Posterior vena cava (tissue), 2 donors: ENCODE measurements at regions of chr19 and their contacts with region 1.

Region 1: GRCh38 chr19:44164673-44165512 is at the start of gene ZNF226:
- DNase-seq: peak; percentile 95
- total RNA-seq, gene ZNF226: 15.8 to 19.8 TPM

Region 2: GRCh38 chr19:44042147-44042546 is 122.7 kb before region 1 on chr19:
- intact Hi-C with region 1: no loop called
- DNase-seq: no peak

Region 3: GRCh38 chr19:44500148-44500956 is 335.5 kb after region 1 on chr19 and contains the start of gene ZNF180:
- intact Hi-C with region 1: loop called in 1 of 2 experiments (anchors 5 kb)
- DNase-seq: peak; percentile 98
- total RNA-seq, gene ZNF180: 5.7 to 6.8 TPM